RWPE1 (cell line): ENCODE measurements at regions of chr7 and their contacts with region 1.

Region 1: DNA sequence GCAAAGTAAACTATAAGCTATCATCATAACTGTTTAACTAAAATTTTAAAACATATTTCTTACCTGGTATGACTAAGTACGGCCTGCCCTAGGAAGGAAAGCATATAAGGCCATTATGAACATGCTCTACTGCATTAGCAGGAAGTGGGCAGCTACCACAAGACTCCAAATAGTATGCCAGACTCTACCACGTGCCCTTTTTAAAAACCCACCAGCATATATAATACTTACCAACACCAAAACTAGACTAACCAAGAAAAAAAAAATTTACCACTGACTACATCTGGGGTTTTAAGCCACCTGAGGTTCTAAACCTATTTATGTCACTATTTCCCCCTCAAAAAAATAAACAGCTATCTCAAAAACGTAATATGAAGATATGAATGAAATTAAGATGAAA is 30.1 kb downstream of the NUDCD3 start:
- DNase-seq: no peak
- H3K27ac ChIP-seq: no peak overlapping the region
- CTCF ChIP-seq: no peak

Region 2: DNA sequence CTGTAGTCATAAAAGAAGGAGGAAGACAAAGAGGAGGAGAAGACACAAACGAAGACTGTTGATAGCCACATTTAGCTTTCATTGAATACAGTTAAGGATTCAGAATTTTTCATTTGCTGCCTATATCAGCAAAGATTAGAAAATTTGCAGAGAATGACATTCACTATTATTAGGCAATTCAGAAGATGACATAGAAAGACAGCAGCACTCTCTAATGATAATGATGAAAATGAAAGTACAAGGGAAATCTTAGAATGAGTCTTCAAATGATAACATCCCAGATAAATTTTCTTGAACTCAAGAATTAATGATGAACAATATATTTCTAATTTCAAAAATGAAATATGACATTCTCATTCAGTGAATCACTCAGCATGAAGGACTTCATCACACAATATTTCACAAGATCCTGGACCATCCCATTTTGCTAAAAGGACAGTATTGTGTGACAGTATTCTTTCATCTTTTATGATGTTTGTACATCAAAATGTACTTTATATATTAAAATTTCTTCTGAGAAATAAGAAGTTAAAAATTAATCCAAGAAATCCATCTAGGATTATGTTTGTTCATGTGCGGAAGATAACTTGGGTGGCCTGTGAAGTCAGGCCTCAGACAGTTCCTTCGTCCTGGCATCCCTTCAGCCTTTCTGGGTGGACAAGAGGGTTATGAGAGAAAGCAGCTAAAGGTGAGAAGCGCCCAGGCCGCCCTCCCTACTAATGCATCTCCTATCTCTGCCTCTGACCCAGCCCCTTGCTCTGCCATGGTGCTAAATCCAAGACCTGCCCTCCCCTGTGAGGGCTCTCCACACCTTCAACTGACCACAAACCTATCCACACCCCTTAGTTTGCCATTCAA is 87.5 kb before region 1 on chr7:
- CTCF ChIA-PET with region 1: no interaction called
- POLR2A ChIA-PET with region 1: no interaction called
- DNase-seq: no peak
- H3K27ac ChIP-seq: peak overlapping the region; percentile 50; the same call in 1 of the 2 replicates
- CTCF ChIP-seq: no peak

Region 3: DNA sequence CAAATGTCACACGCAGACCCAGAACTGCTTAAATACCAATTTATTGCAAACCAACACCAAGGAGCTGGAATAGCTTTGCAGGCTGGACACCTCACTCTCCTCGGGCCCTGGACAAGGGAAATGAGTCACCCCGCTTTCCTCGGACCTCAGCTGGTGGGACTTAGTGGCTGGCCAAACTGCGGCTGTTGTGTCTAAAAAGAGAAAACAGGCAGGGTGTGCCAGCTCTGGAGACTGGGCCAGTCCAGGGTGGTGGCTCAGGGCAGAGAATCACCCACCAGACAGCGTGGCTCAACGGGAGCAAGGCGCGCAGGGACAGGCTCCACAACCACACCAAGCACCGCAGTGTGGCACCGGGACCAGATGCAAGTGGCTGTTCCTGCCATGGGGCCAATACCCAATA is 76.8 kb before region 1 on chr7:
- CTCF ChIA-PET with region 1: no interaction called
- POLR2A ChIA-PET with region 1: no interaction called
- DNase-seq: no peak
- H3K27ac ChIP-seq: peak overlapping the region; percentile 62
- CTCF ChIP-seq: no peak

Region 4: GRCh38 chr7:44477063-44477830 is 16.9 kb after region 1 on chr7:
- CTCF ChIA-PET with region 1: interaction called, 10 read pairs
- POLR2A ChIA-PET with region 1: no interaction called
- DNase-seq: peak; percentile 92
- H3K27ac ChIP-seq: peak overlapping the region; percentile 22
- CTCF ChIP-seq: peak; percentile 95